Mammary epithelial cell (primary cell): ENCODE measurements at regions of chr9 and their contacts with region 1.

Region 1: DNA sequence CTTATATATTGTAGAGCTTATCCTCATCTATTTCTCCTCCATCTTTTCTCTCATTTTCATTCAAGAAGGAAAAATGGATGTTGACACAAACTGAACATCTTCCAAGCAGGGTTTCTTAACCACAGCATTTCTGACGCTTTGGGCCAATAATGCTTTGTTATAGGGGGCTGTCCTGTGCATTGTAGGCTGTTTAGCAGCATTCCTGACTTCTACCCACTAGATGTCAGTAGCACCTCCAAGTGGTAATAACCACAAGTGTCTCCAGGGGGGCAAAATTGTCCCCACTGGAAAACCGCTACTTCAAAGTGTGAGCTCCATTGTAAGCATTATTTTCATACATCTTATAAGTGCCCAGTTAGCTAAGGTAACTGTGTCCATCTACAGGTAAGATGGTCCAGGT is 2.7 kb upstream of the TXNDC8 start:
- DNase-seq: no peak
- H3K4me3 ChIP-seq: no peak overlapping the region
- H3K27ac ChIP-seq: no peak overlapping the region
- H3K4me1 ChIP-seq: no peaks in the 10 kb centered on the region
- H3K27me3 ChIP-seq: no peaks in the 10 kb centered on the region
- CTCF ChIP-seq: peak; percentile 15 to 58

Region 2: GRCh38 chr9:110408598-110408997 is 68.3 kb after region 1 on chr9:
- CTCF ChIA-PET with region 1: no interaction called
- dilution Hi-C with region 1: no loop called
- in situ Hi-C with region 1: no loop called
- intact Hi-C with region 1: no loop called
- DNase-seq: no peak
- H3K4me3 ChIP-seq: no peak overlapping the region
- H3K27ac ChIP-seq: no peak overlapping the region
- H3K4me1 ChIP-seq: no peaks in the 10 kb centered on the region
- H3K27me3 ChIP-seq: no peaks in the 10 kb centered on the region
- CTCF ChIP-seq: no peak

Region 3: GRCh38 chr9:110427497-110428104 is 87.3 kb after region 1 on chr9:
- CTCF ChIA-PET with region 1: no interaction called
- dilution Hi-C with region 1: no loop called
- in situ Hi-C with region 1: no loop called
- intact Hi-C with region 1: loop called (anchors 5 kb)
- DNase-seq: peak; percentile 12
- H3K4me3 ChIP-seq: no peak overlapping the region
- H3K27ac ChIP-seq: no peak overlapping the region
- H3K4me1 ChIP-seq: no peaks in the 10 kb centered on the region
- H3K27me3 ChIP-seq: no peaks in the 10 kb centered on the region
- CTCF ChIP-seq: peak; percentile 68 to 73